ENCODE measurements at regions of chr18 and their contacts with region 1.

Region 1: DNA sequence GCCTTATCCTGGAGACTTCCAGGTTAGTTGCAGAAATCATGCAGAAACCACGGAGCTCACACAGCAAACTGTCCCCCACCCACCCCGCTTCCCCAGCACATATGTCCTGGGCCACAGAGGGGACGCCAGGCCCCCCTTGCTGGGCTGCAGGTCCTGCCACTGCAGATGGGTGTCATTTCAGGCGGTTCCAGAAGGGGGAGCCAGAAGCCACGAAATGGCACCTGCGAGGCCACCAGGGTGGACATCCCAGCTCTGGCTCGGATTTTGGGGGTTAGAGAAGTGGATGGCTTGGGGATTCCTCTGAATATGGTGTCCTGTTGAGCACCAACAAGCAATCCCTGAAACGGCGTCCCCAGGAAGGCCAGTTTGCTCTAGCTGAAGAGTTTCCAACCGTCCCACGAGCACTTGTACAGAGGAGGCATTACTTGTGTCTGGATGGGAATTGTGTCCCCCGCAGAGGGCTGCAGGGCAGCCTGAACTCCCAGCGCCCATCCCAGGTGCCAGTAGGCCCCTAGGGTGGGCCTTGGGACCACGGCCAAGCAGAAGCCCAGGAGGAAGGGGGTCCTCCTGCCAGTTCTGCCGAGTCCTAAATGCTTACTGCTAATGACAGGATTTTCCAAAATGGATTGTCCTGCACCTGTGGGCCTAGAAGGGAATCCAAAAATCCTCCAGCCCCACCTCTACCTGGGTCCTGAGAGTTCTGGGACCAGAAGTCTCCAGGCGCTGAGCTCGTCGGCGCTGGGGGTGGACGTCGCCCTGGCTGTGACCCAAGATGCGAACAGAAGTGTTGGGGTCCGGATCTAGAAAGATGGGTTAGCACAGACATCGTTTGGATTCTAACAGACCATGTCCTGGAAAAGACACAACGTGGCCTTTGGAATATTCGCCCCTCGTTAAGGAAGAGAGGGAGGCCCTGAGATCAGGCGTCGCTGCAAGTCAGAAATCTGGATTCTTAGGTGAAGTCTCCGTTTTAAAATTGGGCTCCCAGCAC is 14.6 kb upstream of the NFATC1 start:
- DNase-seq: peak in 2 of 4 donors; percentile 64 to 84
- ATAC-seq: peak; percentile 66
- H3K4me3 ChIP-seq: no peak overlapping the region
- H3K27ac ChIP-seq: no peak overlapping the region
- H3K4me1 ChIP-seq: peaks cover 0 to 8% of the 10 kb centered on the region in 2 donors
- H3K27me3 ChIP-seq: peaks cover 0 to 3% of the 10 kb centered on the region in 2 donors
- CTCF ChIP-seq: peak; percentile 79 to 85

Region 2: DNA sequence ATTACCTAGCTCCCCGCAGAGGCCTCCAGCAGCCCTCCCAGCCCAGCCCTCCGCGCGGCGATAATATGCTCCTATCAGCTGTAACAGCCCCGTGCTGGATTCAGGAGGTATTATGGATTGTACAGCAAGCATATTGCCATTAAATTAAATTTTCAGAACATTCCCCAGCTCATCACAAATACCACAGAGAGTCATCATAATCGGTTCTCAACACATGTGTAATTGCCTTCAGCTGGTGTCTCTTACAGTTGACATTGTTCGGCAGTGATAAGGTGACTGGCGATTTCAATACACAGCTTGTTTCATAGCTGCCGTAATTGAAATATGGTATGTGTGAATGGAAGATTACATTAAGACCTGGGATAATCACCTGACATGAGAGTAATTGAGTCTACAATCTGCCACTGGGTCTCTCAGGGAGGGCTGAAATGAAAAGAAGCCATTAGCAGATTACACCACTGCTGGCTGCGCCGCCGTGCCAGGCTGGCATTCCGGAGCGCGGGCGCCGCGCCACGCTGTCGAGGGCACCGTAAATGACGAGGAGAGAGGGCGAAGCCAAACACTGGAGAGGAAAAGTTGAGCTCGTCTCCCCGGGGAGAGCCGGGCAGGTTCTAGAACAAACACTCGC is 950.9 kb before region 1 on chr18:
- intact Hi-C with region 1: no loop called
- DNase-seq: no peak
- ATAC-seq: no peak
- H3K4me3 ChIP-seq: no peak overlapping the region
- H3K27ac ChIP-seq: no peak overlapping the region
- H3K4me1 ChIP-seq: no peaks in the 10 kb centered on the region
- H3K27me3 ChIP-seq: no peaks in the 10 kb centered on the region
- CTCF ChIP-seq: no peak

Region 3: GRCh38 chr18:78893278-78894035 is 487.7 kb before region 1 on chr18:
- intact Hi-C with region 1: no loop called
- DNase-seq: peak in 1 of 4 donors; percentile 48
- ATAC-seq: no peak
- H3K4me3 ChIP-seq: no peak overlapping the region
- H3K27ac ChIP-seq: no peak overlapping the region
- H3K4me1 ChIP-seq: no peaks in the 10 kb centered on the region
- H3K27me3 ChIP-seq: no peaks in the 10 kb centered on the region
- CTCF ChIP-seq: no peak

Region 4: DNA sequence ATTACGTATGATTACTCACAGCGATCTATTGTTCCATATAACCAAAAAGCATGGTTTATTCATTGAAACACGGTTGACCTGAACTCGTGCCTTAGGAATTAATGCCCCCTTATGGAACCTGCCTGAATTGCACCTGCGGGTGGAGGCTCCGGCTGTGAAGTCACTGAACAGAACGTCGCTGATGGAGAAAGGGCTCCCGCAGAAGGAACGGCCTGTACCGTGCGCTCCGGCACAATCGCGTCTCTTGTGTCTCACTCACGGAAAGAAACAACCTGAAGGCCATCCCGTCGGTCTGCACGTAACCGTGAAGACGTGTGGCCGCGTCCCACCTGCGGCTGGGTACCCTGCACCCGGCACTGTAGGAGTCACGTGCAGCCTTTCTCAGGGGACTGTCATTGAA is 147.7 kb after region 1 on chr18:
- intact Hi-C with region 1: loop called in 1 of 2 experiments (anchors 5 kb)
- DNase-seq: peak in 3 of 4 donors; percentile 39 to 63 (median 54)
- ATAC-seq: peak; percentile 60
- H3K4me3 ChIP-seq: no peak overlapping the region
- H3K27ac ChIP-seq: no peak overlapping the region
- H3K4me1 ChIP-seq: peaks cover 9 to 17% of the 10 kb centered on the region in 2 donors
- H3K27me3 ChIP-seq: peaks cover 0 to 24% of the 10 kb centered on the region in 2 donors
- CTCF ChIP-seq: peak; percentile 76 to 82

Region 5: GRCh38 chr18:79644006-79644665 is 263.0 kb after region 1 on chr18:
- intact Hi-C with region 1: loop called (anchors 2 to 10 kb)
- DNase-seq: peak; percentile 32 to 87 (median 64)
- ATAC-seq: peak; percentile 95
- H3K4me3 ChIP-seq: no peak overlapping the region
- H3K27ac ChIP-seq: no peak overlapping the region
- H3K4me1 ChIP-seq: peaks cover 3 to 24% of the 10 kb centered on the region in 2 donors
- H3K27me3 ChIP-seq: peaks cover 0 to 25% of the 10 kb centered on the region in 2 donors
- CTCF ChIP-seq: peak; percentile 95 to 96

Measured in left lung (tissue), 14 donors.